ENCODE measurements at regions of chr12 and their contacts with region 1.

Region 1: DNA sequence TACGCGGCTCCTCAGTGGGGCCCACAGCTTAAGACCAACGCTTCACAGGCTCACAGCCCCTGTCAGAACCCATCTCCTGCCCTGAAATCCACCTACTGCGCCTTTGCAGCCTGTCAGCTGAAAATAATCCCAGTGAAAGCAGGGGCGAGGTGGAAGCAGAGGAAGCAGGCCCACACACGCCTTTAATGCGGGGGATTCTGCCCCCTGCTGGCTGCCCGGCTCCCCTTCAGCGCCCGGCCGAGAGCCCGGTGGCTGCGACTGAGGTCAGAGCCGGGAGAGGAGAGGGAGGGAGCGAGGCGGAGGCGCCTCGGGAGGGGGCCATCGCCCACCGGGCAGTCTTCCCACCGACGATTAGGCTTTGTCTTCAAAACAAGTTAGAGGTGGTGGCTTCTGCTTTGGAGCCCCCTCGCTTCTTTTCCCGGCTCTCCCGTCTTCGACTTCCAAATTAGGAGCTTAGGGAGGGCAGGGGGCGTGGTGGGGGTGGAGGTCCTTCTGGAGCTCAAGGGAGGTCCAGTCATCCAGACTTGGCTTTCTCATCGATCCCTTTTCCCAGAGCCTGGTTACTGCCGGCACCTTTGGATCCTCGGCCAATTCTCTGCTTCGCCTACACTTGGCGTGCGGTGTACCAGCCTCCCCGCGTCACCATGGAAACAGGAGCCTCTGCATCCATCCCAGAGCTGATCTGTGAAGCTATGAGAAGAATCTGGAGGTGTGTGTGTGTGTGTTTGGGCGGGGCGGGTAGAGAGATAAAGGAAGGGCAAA is 25.2 kb upstream of the RND1 start:
- DNase-seq: peak; percentile 74
- ATAC-seq: peak; percentile 98
- H3K4me3 Mint-ChIP-seq: no peak overlapping the region
- H3K27ac Mint-ChIP-seq: no peak overlapping the region
- H3K4me1 Mint-ChIP-seq: no peaks in the 10 kb centered on the region
- H3K27me3 Mint-ChIP-seq: peaks cover 14% of the 10 kb centered on the region
- CTCF ChIP-seq: peak; percentile 75

Region 2: DNA sequence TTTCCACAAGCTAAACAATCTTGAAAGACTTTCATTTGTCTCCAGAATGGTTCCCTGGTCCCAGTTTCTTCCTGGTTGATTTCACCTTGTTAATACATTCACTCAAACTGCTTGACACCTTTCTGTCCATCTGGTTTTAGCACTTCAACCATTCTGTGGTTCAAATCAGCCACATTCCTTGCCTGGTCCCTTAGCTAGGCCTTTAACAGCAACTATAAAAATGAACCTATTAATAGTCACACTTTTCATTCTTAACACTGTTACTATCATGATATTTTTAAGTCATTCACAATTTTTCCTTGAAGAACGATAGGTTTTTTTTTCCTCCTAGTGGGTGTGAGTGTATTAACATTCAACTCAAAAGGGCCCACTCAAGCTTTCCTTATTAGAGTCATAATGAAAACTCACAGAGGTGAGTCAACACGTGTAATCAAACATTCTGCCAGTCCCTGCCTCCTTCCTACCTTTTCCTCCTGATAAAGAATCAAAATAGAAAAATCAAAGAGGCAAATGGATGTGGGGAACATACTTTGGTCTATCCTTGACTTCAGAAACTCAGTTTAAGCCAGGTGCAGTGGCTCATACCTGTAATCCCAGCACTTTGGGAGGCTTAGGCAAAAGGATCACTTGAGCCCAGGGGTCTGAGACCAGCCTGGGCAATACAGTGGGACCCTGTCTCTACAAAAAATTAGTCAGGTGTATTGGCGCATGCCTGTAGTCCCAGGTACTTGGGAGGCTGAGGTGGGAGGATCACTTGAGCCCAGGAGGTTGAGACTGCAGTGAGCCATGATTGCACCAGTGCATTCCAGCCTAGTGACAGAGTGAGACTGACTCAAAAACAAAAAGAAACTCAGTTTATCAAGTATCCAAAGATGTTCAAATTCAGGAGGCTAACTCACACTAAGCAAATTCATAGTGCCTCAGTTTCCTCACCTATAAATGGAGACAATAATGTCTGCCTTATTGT is 139.8 kb before region 1 on chr12:
- CTCF ChIA-PET with region 1: interaction called, 3 read pairs
- POLR2A ChIA-PET with region 1: interaction called, 3 read pairs
- intact Hi-C with region 1: loop called (anchors 5 kb)
- DNase-seq: no peak
- ATAC-seq: no peak
- H3K4me3 Mint-ChIP-seq: no peak overlapping the region
- H3K27ac Mint-ChIP-seq: no peak overlapping the region
- H3K4me1 Mint-ChIP-seq: no peaks in the 10 kb centered on the region
- H3K27me3 Mint-ChIP-seq: peaks cover 1% of the 10 kb centered on the region
- CTCF ChIP-seq: no peak

Region 3: DNA sequence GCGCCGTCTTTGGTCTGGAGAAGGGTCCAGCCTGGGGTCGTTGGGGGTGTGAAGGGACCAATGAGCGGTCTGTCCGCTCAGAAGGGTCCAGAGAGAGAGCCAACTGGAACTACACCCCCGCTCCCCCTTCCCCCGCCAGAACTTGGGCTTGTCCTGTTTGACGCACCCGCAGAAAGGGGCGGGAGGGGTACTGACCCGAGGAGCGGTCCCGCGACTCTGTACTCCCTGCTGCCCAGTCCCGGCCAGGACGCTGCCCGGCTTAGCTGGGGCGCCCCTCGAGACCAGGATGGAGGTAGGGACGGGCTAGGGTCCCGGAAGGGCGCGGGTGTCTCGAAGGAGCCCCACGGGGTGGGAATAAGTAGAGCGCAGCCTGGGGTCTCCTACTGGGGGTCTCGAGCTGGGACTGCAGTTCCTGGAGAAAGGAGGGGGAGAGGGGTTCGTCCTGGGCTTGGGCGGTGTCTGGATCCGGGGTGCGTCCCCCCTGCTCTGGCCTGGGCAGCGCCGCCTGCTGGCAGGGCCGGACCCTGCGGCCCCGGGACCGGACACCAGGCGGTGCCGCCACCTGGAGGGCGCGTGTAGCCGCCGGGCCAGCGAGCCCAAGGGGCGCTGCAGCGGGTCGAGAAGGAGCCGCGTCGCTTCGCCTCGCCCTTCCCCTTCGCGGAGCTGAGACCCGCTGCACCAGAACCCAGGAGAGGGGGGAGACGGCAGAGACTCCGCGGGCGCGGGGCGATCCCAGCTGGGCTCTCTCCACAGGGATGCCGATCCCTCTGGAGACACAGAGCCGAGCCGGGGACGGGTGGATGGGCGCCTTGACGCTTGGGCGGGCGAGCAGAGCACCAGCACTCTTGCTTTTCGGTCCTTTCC is 76.3 kb before region 1 on chr12:
- CTCF ChIA-PET with region 1: interaction called, 6 read pairs
- POLR2A ChIA-PET with region 1: interaction called, 4 read pairs
- intact Hi-C with region 1: loop called (anchors 2 kb)
- DNase-seq: peak; percentile 88
- ATAC-seq: peak; percentile 83
- H3K4me3 Mint-ChIP-seq: peak overlapping the region; percentile 92
- H3K27ac Mint-ChIP-seq: peak overlapping the region; percentile 18
- H3K4me1 Mint-ChIP-seq: peaks cover 38% of the 10 kb centered on the region
- H3K27me3 Mint-ChIP-seq: peaks cover 13% of the 10 kb centered on the region
- CTCF ChIP-seq: peak; percentile 97

Region 4: DNA sequence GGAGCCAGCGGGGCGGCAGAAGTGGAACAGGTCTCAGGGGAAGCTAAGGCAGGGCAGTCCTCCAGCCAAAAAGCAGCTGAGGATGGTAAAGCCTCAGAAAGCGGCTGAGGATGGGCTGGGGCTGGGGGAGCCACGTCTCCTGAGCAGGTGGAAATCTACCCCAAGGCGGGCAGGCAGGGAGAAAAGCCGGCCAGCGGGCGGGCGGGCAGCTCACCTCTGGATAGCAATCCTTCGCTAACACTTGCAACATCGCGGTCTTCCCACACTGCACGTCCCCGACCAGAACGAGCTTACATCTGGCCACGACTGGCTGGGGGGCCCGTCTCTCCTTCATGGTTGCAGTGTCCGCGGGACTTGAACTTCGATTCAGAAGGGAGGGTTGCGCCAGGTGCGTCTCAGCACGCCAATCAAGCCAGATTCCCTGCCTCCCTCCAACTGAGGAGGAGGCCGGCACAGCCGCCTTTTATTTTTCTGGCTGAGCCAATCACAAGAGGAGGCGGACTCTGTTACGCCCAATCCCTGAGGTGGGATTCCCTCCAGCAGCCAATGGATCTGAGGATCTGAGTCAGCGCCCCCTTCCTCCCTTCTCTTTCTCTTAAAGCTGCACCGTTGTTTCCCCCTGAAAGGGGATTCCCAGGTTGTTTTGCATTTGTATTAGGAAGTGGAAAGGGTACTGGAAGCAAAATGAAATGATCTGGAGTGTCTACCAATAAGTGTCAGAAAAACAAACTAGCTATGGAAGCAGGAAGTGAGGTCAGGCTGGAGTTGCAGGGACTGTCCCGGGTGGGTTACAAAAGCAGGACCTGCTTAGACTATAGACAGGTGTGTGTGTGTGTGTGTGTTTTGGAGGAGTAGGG is 25.2 kb before region 1 on chr12 and contains the start of gene RND1:
- CTCF ChIA-PET with region 1: interaction called, 10 read pairs
- POLR2A ChIA-PET with region 1: interaction called, 5 read pairs
- intact Hi-C with region 1: no loop called
- DNase-seq: peak; percentile 64
- ATAC-seq: peak; percentile 90
- H3K4me3 Mint-ChIP-seq: peak within 1 kb of the TSS; percentile 95
- H3K27ac Mint-ChIP-seq: peak within 1 kb of the TSS; percentile 78
- H3K4me1 Mint-ChIP-seq: peaks cover 27% of the 10 kb centered on the region
- H3K27me3 Mint-ChIP-seq: no peaks in the 10 kb centered on the region
- CTCF ChIP-seq: no peak
- total RNA-seq, gene RND1: 4.9 and 5.9 TPM in 2 replicates

Region 5: GRCh38 chr12:48903982-48904411 is 13.2 kb after region 1 on chr12:
- CTCF ChIA-PET with region 1: interaction called, 11 read pairs
- POLR2A ChIA-PET with region 1: no interaction called
- intact Hi-C with region 1: no loop called
- DNase-seq: peak; percentile 53
- ATAC-seq: peak; percentile 97
- H3K4me3 Mint-ChIP-seq: peak overlapping the region; percentile 77
- H3K27ac Mint-ChIP-seq: no peak overlapping the region
- H3K4me1 Mint-ChIP-seq: peaks cover 10% of the 10 kb centered on the region
- H3K27me3 Mint-ChIP-seq: peaks cover 18% of the 10 kb centered on the region
- CTCF ChIP-seq: no peak

Region 6: GRCh38 chr12:49462083-49462744 is 571.4 kb after region 1 on chr12:
- CTCF ChIA-PET with region 1: no interaction called
- POLR2A ChIA-PET with region 1: no interaction called
- intact Hi-C with region 1: no loop called
- DNase-seq: no peak
- ATAC-seq: no peak
- H3K4me3 Mint-ChIP-seq: no peak overlapping the region
- H3K27ac Mint-ChIP-seq: no peak overlapping the region
- H3K4me1 Mint-ChIP-seq: no peaks in the 10 kb centered on the region
- H3K27me3 Mint-ChIP-seq: no peaks in the 10 kb centered on the region
- CTCF ChIP-seq: no peak

Measured in activated B cell treated with CpG ODN at 0.5 μM for 24 hours (primary cell).